Calu3 (cell line): ENCODE measurements at regions of chrX and their contacts with region 1.

Region 1: GRCh38 chrX:103711533-103712369 is 1.0 kb downstream of the TMEM31 start:
- DNase-seq: peak; percentile 51
- H3K4me3 Mint-ChIP-seq: no peak overlapping the region
- H3K27ac Mint-ChIP-seq: no peak overlapping the region
- H3K4me1 Mint-ChIP-seq: no peaks in the 10 kb centered on the region
- H3K27me3 Mint-ChIP-seq: peaks cover 74% of the 10 kb centered on the region
- CTCF ChIP-seq: peak; percentile 56

Region 2: GRCh38 chrX:103774070-103774642 is 62.4 kb after region 1 on chrX:
- CTCF ChIA-PET with region 1: no interaction called
- intact Hi-C with region 1: loop called (anchors 5 kb)
- DNase-seq: peak; percentile 6
- H3K4me3 Mint-ChIP-seq: no peak overlapping the region
- H3K27ac Mint-ChIP-seq: no peak overlapping the region
- H3K4me1 Mint-ChIP-seq: no peaks in the 10 kb centered on the region
- H3K27me3 Mint-ChIP-seq: peaks cover 76% of the 10 kb centered on the region
- CTCF ChIP-seq: peak; percentile 10